ENCODE measurements at regions of chr4 and their contacts with region 1.

Region 1: DNA sequence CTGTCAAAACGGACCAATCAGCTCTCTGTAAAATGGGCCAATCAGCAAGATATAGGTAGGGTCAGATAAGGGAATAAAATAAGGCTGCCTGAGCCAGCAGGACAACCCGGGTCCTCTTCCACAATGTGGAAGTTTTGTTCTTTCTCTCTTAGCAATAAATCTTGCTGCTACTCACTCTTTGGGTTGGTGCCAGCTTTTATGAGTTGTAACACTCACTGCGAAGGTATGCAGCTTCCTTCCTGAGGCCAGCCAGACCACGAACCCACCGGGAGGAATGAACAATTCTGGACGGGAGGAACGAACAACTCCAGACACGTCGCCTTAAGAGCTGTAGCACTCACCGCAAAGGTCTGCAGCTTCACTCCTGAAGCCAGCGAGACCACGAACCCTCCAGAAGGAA is 287.8 kb downstream of the RAPGEF2 start:
- DNase-seq: peak in 1 of 2 donors; percentile 54
- ATAC-seq: no peak
- H3K4me3 ChIP-seq: no peak overlapping the region
- H3K27ac ChIP-seq: peak overlapping the region in 1 of 2 donors; percentile 30
- H3K4me1 ChIP-seq: no peaks in the 10 kb centered on the region
- H3K27me3 ChIP-seq: no peaks in the 10 kb centered on the region

Region 2: DNA sequence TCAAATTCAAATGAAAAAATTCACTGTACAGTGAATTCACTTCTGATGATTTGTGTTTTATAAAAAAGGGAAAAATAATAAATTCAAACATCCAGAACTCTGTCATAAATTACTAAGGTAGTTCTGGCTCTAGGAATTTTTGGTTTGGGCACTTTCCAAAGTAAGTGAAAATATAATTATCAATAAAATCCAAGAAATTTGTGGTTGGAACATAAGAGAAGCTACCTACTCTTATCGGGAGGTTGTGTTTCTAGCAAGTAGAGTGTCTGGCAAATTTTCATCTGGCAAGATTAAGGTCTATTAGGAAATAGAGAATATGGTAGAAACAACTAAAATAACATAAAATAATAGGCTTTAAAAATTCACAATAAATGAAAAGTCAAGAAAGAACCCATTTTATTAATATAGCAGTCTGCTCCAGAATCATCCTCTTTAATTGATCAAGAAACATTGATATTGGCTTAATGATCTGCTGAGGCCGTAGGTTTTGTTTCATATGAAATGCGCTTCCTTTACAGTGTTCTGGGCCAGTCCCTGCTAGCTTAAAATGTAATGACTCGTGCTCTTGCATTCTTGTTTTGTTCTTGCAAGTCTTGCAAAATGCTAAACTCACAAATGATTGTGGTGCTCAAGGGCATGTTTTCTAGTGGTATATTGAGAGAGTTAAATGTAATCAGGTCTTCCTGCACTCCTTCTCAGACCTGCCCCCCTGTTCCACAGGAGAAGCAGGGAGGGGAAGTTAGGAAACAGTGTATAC is 43.6 kb after region 1 on chr4:
- intact Hi-C with region 1: loop called in 1 of 2 experiments (anchors 5 kb)
- DNase-seq: no peak
- ATAC-seq: no peak
- H3K4me3 ChIP-seq: no peak overlapping the region
- H3K27ac ChIP-seq: peak overlapping the region in 1 of 2 donors; percentile 12
- H3K4me1 ChIP-seq: peaks cover 0 to 6% of the 10 kb centered on the region in 2 donors
- H3K27me3 ChIP-seq: no peaks in the 10 kb centered on the region

Measured in aorta (tissue), 5 donors.